AG04449 (cell line): ENCODE measurements at regions of chr9 and their contacts with region 1.

Region 1: DNA sequence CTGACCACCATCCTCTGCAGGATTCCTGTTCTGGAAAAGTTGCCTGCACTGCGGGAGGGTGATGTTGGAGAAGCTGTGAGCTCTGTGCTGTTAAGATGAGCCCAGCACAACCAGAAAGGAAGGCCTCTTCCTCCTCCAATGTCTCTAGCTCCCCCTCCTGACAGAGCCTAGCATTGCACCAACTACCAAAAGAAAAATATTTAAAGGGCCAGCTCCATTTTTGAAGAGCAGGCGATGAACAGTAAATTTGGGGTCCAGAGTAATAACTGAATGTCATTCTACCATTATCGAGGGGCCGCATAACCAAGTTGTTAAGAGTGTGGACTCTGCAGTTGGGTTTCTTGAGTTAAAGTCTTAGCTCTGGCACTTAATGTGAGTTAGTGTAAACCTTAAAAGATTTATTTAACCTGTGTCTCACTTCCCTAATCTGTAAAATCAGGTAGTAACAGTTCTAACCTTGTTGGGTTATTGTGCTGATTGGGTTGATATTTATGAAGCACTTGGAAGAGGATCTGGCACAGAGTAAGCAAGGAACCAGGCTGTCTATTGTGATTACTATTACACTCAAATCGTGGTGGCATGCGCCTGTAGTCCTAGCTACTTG is 3.9 kb downstream of the TEX53 start:
- DNase-seq: no peak
- H3K4me3 ChIP-seq: no peak overlapping the region
- CTCF ChIP-seq: peak; percentile 82

Region 2: GRCh38 chr9:114413861-114414301 is 239.8 kb before region 1 on chr9:
- CTCF ChIA-PET with region 1: interaction called, 238 read pairs
- POLR2A ChIA-PET with region 1: no interaction called
- DNase-seq: no peak
- H3K4me3 ChIP-seq: no peak overlapping the region
- CTCF ChIP-seq: no peak

Region 3: GRCh38 chr9:114487607-114488300 is 165.9 kb before region 1 on chr9:
- CTCF ChIA-PET with region 1: interaction called, 122 read pairs
- POLR2A ChIA-PET with region 1: no interaction called
- DNase-seq: peak; percentile 5
- H3K4me3 ChIP-seq: no peak overlapping the region
- CTCF ChIP-seq: peak; percentile 87

Region 4: GRCh38 chr9:114606597-114607207 is 47.0 kb before region 1 on chr9:
- CTCF ChIA-PET with region 1: interaction called, 10 read pairs
- POLR2A ChIA-PET with region 1: no interaction called
- DNase-seq: peak; percentile 69
- H3K4me3 ChIP-seq: no peak overlapping the region
- CTCF ChIP-seq: no peak

Region 5: GRCh38 chr9:114671605-114672004 is 17.9 kb after region 1 on chr9:
- CTCF ChIA-PET with region 1: interaction called, 21 read pairs
- POLR2A ChIA-PET with region 1: no interaction called
- DNase-seq: no peak
- H3K4me3 ChIP-seq: no peak overlapping the region
- CTCF ChIP-seq: no peak

Region 6: GRCh38 chr9:114968671-114969070 is 315.0 kb after region 1 on chr9:
- CTCF ChIA-PET with region 1: no interaction called
- POLR2A ChIA-PET with region 1: no interaction called
- DNase-seq: no peak
- H3K4me3 ChIP-seq: no peak overlapping the region
- CTCF ChIP-seq: no peak

Region 7: DNA sequence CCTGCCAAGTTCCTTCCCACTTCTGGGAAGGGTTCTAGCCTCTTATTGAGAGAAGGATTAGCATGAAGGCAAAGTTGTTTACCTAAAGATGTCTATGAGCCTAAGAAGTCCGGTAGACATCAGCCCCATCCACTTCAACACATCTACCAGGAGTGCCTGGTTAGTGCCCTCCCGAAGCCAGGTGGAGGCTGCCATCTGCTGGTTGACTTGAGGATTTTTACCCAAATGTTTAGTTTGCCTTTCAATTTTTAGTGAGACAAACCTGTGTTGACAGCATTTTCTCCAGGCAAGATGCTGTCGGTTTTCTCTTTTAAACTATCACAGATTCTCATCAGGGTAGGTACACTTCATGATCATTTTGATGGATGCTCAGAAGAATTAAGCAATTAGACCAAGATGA is 360.3 kb after region 1 on chr9:
- CTCF ChIA-PET with region 1: interaction called, 38 read pairs
- POLR2A ChIA-PET with region 1: no interaction called
- DNase-seq: no peak
- H3K4me3 ChIP-seq: no peak overlapping the region
- CTCF ChIP-seq: peak; percentile 67